Activated CD8-positive, alpha-beta memory T cell treated with anti-CD3 and anti-CD28 coated beads, Interleukin-2, amount 10 ng/mL, durations not matched to agents 7 days and 5 days (primary cell): ENCODE measurements at regions of chr4 and their contacts with region 1.

Region 1: DNA sequence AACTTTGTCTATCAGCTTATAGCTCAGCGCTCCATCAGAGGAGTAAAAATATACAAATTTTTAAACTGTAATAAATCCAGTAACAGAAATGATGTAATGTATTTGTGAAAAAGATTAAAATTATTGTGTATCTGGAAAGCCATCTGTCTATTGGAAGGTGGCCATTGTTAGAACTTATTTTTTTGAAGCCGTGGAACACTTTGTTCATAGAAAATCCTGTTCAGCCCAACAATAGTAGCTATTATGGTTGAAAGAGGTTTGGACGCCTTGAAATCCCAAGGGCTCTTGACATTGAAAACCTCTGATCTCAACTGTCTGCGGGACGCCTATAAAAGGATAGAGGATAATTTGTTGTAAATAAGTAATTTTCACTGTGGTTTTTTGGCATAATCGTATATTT is 98.3 kb downstream of the RAPGEF2 start:
- DNase-seq: no peak
- ATAC-seq: no peak
- H3K4me3 Mint-ChIP-seq: no peak overlapping the region
- H3K27ac Mint-ChIP-seq: no peak overlapping the region
- H3K4me1 Mint-ChIP-seq: peaks cover 35% of the 10 kb centered on the region
- H3K27me3 Mint-ChIP-seq: no peaks in the 10 kb centered on the region

Region 2: DNA sequence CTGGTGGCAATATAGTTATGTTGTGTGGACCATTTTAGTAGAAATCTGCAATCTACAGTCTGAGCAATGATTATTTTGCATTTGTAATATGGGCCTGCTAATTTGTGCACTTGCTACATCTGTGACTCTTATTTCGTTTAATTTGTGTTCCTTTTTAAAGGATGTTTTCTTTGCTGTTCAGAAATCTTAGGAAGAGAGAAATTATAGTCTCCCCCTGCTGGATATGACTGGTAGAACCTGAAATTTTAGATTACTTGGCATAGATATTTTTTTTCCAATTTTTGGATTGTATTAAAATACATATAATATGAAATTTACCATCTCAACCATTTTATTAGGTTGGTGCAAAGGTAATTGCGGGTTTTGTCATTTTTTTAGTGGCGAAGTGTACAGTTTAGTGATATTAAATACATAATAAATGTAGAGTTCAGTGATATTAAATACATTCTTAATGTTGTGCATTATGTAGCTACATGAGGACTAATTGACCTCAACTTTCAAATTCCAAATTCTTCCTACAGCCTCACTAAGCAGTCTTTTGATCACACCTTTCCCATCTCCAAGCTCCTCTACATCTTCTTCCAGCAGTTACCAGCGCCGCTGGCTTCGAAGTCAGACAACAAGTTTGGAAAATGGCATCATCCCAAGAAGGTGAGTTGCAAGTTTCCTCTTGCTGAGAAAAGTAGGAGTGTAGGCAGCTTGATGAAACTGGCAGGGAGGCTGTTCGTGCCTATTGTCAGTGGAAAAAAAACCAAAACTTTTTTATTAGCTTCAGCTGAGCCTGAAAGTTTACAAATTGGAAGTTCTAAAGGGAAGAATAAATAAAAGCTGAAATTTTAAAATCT is 350.1 kb before region 1 on chr4:
- CTCF ChIA-PET with region 1: interaction called, 33 read pairs
- DNase-seq: no peak
- ATAC-seq: peak; percentile 30
- H3K4me3 Mint-ChIP-seq: no peak overlapping the region
- H3K27ac Mint-ChIP-seq: no peak overlapping the region
- H3K4me1 Mint-ChIP-seq: peaks cover 13% of the 10 kb centered on the region
- H3K27me3 Mint-ChIP-seq: no peaks in the 10 kb centered on the region

Region 3: DNA sequence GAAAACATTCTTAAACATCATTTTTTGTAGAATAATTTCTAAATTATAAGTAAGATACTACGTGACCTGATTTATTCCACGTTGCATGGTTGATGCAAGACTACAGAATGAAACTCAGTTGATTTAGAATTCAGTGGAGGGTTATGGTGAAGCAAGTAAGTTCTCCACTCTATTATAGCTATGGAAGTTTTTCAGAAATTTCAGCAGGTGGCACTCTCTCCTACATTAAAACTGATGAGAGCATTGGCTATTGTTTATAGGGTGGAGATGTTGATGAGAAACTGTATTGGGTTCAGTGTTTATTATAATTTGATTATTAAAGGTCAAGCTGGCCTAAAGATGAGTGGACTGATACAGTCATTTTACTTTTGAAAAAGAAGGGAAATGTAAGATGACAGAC is 344.3 kb before region 1 on chr4:
- CTCF ChIA-PET with region 1: interaction called, 33 read pairs
- DNase-seq: no peak
- ATAC-seq: peak; percentile 84
- H3K4me3 Mint-ChIP-seq: no peak overlapping the region
- H3K27ac Mint-ChIP-seq: no peak overlapping the region
- H3K4me1 Mint-ChIP-seq: peaks cover 13% of the 10 kb centered on the region
- H3K27me3 Mint-ChIP-seq: no peaks in the 10 kb centered on the region

Region 4: DNA sequence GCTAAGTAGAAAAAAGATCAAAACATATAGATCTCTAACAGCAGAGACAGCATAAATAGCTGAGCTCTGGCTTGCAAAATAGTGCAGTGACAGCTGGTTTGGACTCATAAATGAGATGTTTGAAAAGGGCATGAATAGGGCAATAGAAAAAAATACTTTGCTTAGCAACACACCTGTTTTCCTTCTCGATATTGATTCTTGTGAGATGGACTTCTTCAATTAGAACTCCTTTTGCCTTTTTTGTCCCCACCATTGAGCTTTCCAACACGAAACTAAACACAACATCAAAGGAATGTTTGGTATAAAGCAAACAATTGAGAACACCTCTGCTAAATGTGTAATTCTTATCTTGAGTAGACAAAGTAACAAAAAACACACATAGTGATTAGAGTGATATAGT is 628.0 kb after region 1 on chr4:
- CTCF ChIA-PET with region 1: no interaction called
- DNase-seq: no peak
- ATAC-seq: no peak
- H3K4me3 Mint-ChIP-seq: no peak overlapping the region
- H3K27ac Mint-ChIP-seq: no peak overlapping the region
- H3K4me1 Mint-ChIP-seq: no peaks in the 10 kb centered on the region
- H3K27me3 Mint-ChIP-seq: no peaks in the 10 kb centered on the region